Gastrocnemius medialis (tissue), 4 donors: ENCODE measurements at regions of chr6 and their contacts with region 1.

Region 1: GRCh38 chr6:159968440-159969203 is at the start of gene IGF2R:
- DNase-seq: peak; percentile 91 to 95
- ATAC-seq: peak; percentile 73 to 79
- H3K4me3 ChIP-seq: peak within 1 kb of the TSS; percentile 79 to 96 (median 90)
- H3K27ac ChIP-seq: peak within 1 kb of the TSS; percentile 95 to 98 (median 96)
- H3K4me1 ChIP-seq: peaks cover 42 to 43% of the 10 kb centered on the region in 2 donors
- H3K27me3 ChIP-seq: no peaks in the 10 kb centered on the region
- CTCF ChIP-seq: peak in 2 of 5 experiments; percentile 13 to 48
- POLR2A ChIP-seq: peak; percentile 94 to 95
- total RNA-seq, gene IGF2R: 56.6 to 134 (median 108) TPM

Region 2: GRCh38 chr6:160069050-160069454 is 100.4 kb after region 1 on chr6:
- in situ Hi-C with region 1: no loop called
- intact Hi-C with region 1: loop called (anchors 2 kb)
- DNase-seq: no peak
- ATAC-seq: no peak
- H3K4me3 ChIP-seq: no peak overlapping the region
- H3K27ac ChIP-seq: no peak overlapping the region
- H3K4me1 ChIP-seq: peaks cover 10 to 28% of the 10 kb centered on the region in 2 donors
- H3K27me3 ChIP-seq: no peaks in the 10 kb centered on the region
- CTCF ChIP-seq: no peak
- POLR2A ChIP-seq: no peak